CD8-positive, alpha-beta T cell (primary cell): ENCODE measurements at regions of chr11 and their contacts with region 1.

Region 1: GRCh38 chr11:76680518-76681425 is 10.2 kb upstream of the LRRC32 start:
- DNase-seq: peak in 8 of 9 experiments; percentile 44 to 72 (median 62)
- ATAC-seq: peak; percentile 68
- H3K4me3 ChIP-seq: no peak overlapping the region
- H3K4me3 Mint-ChIP-seq: no peak overlapping the region
- H3K27ac ChIP-seq: no peak overlapping the region
- H3K27ac Mint-ChIP-seq: no peak overlapping the region
- H3K4me1 ChIP-seq: peaks cover 2% of the 10 kb centered on the region
- H3K4me1 Mint-ChIP-seq: peaks cover 3% of the 10 kb centered on the region
- H3K27me3 ChIP-seq: no peaks in the 10 kb centered on the region
- H3K27me3 Mint-ChIP-seq: peaks cover 2% of the 10 kb centered on the region
- CTCF ChIP-seq: peak; percentile 72

Region 2: GRCh38 chr11:75896843-75897419 is 783.8 kb before region 1 on chr11:
- CTCF ChIA-PET with region 1: no interaction called
- POLR2A ChIA-PET with region 1: no interaction called
- intact Hi-C with region 1: loop called (anchors 5 to 10 kb)
- DNase-seq: peak in 2 of 9 experiments; percentile 31 to 48
- ATAC-seq: peak; percentile 46
- H3K4me3 ChIP-seq: no peak overlapping the region
- H3K4me3 Mint-ChIP-seq: no peak overlapping the region
- H3K27ac ChIP-seq: no peak overlapping the region
- H3K27ac Mint-ChIP-seq: no peak overlapping the region
- H3K4me1 ChIP-seq: no peaks in the 10 kb centered on the region
- H3K4me1 Mint-ChIP-seq: peaks cover 1% of the 10 kb centered on the region
- H3K27me3 ChIP-seq: no peaks in the 10 kb centered on the region
- H3K27me3 Mint-ChIP-seq: no peaks in the 10 kb centered on the region
- CTCF ChIP-seq: peak; percentile 85

Region 3: GRCh38 chr11:76551400-76551799 is 129.4 kb before region 1 on chr11:
- CTCF ChIA-PET with region 1: no interaction called
- POLR2A ChIA-PET with region 1: no interaction called
- intact Hi-C with region 1: loop called (anchors 2 kb)
- DNase-seq: no peak
- ATAC-seq: no peak
- H3K4me3 ChIP-seq: no peak overlapping the region
- H3K4me3 Mint-ChIP-seq: no peak overlapping the region
- H3K27ac ChIP-seq: no peak overlapping the region
- H3K27ac Mint-ChIP-seq: no peak overlapping the region
- H3K4me1 ChIP-seq: no peaks in the 10 kb centered on the region
- H3K4me1 Mint-ChIP-seq: no peaks in the 10 kb centered on the region
- H3K27me3 ChIP-seq: no peaks in the 10 kb centered on the region
- H3K27me3 Mint-ChIP-seq: no peaks in the 10 kb centered on the region
- CTCF ChIP-seq: no peak